ENCODE measurements at regions of chr3 and their contacts with region 1.

Region 1: DNA sequence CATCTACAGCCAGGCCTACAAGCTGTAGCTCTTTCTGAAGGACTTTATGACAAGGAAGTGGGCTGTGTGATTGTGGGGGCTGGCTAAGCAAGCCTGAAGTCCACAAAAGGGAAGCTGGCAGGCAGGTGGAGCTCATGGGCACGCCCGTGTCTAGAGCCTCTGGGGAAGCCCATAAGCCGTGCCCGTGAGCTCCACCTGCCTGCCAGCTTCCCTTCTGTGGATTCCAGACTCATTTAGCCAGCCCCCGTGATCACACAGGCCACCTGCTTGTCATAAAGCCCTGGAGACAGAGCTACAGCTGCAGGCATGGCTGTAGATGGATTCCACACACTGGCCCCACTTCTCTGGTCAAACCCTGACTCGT is 15.2 kb downstream of the EFCC1 start:
- DNase-seq: peak; percentile 80
- H3K4me3 Mint-ChIP-seq: peak overlapping the region; percentile 62
- H3K27ac Mint-ChIP-seq: peak overlapping the region; percentile 93
- H3K4me1 Mint-ChIP-seq: peaks cover 34% of the 10 kb centered on the region
- H3K27me3 Mint-ChIP-seq: no peaks in the 10 kb centered on the region

Region 2: DNA sequence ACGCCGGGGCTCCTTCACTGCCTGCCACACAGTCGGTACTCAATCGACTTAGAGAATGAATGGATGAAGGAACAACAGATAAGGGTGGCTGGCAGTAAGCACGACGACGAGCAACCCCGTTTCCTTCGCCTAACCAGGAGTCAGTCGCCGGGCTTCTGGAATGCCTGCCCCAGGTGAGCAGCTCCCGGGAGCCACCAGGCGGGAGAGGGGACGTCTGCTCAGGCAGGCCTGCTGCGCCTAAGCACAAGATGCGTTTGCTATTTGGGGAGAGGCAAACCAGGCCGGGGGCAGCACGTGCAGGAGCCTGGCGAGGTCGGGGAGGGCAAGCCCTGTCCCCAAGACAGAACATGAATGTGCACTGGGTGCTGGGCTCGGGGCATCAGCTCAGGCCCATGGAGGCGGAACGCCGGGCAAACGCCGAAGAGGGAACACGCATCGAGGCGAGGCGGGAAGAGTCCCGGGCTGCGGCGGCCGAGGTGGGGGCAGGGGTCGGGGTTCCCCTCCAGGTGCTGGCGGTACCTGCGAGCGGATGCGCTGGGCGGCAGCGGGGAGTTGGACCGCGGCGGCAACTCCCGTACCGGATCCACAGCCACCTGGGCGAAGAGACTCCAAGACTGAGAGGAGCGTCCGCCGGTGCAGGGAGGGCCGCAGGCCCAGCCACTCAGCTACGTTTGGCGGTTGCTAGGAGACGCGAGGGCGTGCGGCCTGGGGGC is 22.7 kb before region 1 on chr3 and contains the start of gene CFAP92:
- CTCF ChIA-PET with region 1: interaction called, 24 read pairs
- POLR2A ChIA-PET with region 1: interaction called, 7 read pairs
- intact Hi-C with region 1: loop called (anchors 2 kb)
- DNase-seq: peak; percentile 95
- H3K4me3 Mint-ChIP-seq: peak within 1 kb of the TSS; percentile 57
- H3K27ac Mint-ChIP-seq: no peak within 1 kb of the TSS
- H3K4me1 Mint-ChIP-seq: peaks cover 21% of the 10 kb centered on the region
- H3K27me3 Mint-ChIP-seq: no peaks in the 10 kb centered on the region
- total RNA-seq, gene CFAP92: 0.24 TPM in 1 of 2 experiments, not detected in the other

Region 3: GRCh38 chr3:129026728-129027543 is 10.6 kb after region 1 on chr3:
- CTCF ChIA-PET with region 1: interaction called, 70 read pairs
- POLR2A ChIA-PET with region 1: interaction called, 26 read pairs
- intact Hi-C with region 1: no loop called
- DNase-seq: peak; percentile 96
- H3K4me3 Mint-ChIP-seq: peak overlapping the region; percentile 73
- H3K27ac Mint-ChIP-seq: peak overlapping the region; percentile 83
- H3K4me1 Mint-ChIP-seq: peaks cover 9% of the 10 kb centered on the region
- H3K27me3 Mint-ChIP-seq: no peaks in the 10 kb centered on the region

Region 4: GRCh38 chr3:129160891-129161859 is 144.8 kb after region 1 on chr3 and contains the start of gene ISY1:
- CTCF ChIA-PET with region 1: interaction called, 10 read pairs
- POLR2A ChIA-PET with region 1: interaction called, 3 read pairs
- intact Hi-C with region 1: no loop called
- DNase-seq: peak; percentile 93
- H3K4me3 Mint-ChIP-seq: peak within 1 kb of the TSS; percentile 98
- H3K27ac Mint-ChIP-seq: peak within 1 kb of the TSS; percentile 100
- H3K4me1 Mint-ChIP-seq: peaks cover 31% of the 10 kb centered on the region
- H3K27me3 Mint-ChIP-seq: no peaks in the 10 kb centered on the region
- total RNA-seq, gene ISY1: 60.7 to 61.7 TPM